ENCODE measurements at regions of chr7 and their contacts with region 1.

Region 1: GRCh38 chr7:83532219-83532618 is 116.7 kb downstream of the SEMA3E start:
- DNase-seq: peak; percentile 42
- ATAC-seq: peak; percentile 61
- H3K4me3 ChIP-seq: no peak overlapping the region
- H3K27ac ChIP-seq: no peak overlapping the region
- H3K4me1 ChIP-seq: no peaks in the 10 kb centered on the region
- H3K27me3 ChIP-seq: no peaks in the 10 kb centered on the region; the same call in 1 of the 2 replicates
- CTCF ChIP-seq: no peak
- POLR2A ChIP-seq: no peak
- RAD21 ChIP-seq: no peak

Region 2: GRCh38 chr7:83468251-83468739 is 63.9 kb before region 1 on chr7:
- CTCF ChIA-PET with region 1: no interaction called
- POLR2A ChIA-PET with region 1: no interaction called
- dilution Hi-C with region 1: no loop called
- in situ Hi-C with region 1: no loop called
- intact Hi-C with region 1: loop called (anchors 5 kb)
- DNase-seq: peak; percentile 99
- ATAC-seq: peak; percentile 88
- H3K4me3 ChIP-seq: no peak overlapping the region
- H3K27ac ChIP-seq: peak overlapping the region; percentile 53; the same call in 1 of the 2 replicates
- H3K4me1 ChIP-seq: no peaks in the 10 kb centered on the region
- H3K27me3 ChIP-seq: peaks cover 1% of the 10 kb centered on the region; the same call in 1 of the 2 replicates
- CTCF ChIP-seq: no peak
- POLR2A ChIP-seq: no peak
- RAD21 ChIP-seq: 0 out of 2 replicates have a peak, but pooled peaks have one; percentile 7

Region 3: DNA sequence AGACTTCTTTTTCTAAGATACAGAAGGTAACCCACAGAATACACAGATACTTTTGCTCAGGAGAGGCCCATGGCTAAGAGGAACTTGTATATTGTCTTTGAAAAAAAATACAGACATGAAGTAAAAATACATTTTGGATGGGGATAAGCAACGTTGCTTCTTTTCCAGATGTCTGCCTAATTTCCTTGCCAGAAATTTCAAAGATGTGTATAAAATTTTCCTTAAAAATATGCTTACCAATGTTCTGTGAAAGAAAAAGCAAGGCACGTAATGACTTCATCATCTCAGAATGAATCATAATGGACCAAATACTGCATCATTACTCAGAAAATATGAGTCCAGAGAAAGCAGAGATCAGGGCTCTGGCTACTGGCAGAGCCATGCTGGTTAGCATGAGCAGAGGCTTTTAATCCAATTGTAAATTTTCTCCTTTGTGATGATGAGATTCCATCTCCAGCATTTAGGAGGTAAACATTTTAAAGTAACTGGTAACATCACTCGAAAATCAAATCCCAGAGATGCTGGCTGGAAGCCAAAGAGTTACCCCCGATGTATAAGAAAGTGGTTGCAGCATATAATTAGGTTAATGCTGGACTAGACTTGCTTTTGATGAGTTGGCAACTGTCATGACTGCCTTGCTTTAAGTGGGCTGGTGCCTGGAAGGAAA is 389.9 kb after region 1 on chr7:
- CTCF ChIA-PET with region 1: no interaction called
- POLR2A ChIA-PET with region 1: no interaction called
- dilution Hi-C with region 1: no loop called
- in situ Hi-C with region 1: no loop called
- intact Hi-C with region 1: no loop called
- DNase-seq: peak; percentile 69
- ATAC-seq: peak; percentile 81
- H3K4me3 ChIP-seq: no peak overlapping the region
- H3K27ac ChIP-seq: no peak overlapping the region
- H3K4me1 ChIP-seq: no peaks in the 10 kb centered on the region
- H3K27me3 ChIP-seq: no peaks in the 10 kb centered on the region
- CTCF ChIP-seq: no peak
- POLR2A ChIP-seq: no peak
- RAD21 ChIP-seq: no peak